ENCODE measurements at regions of chr4 and their contacts with region 1.

Region 1: GRCh38 chr4:8440492-8441341 is at the starts of genes ACOX3 and TRMT44:
- DNase-seq: peak; percentile 76 to 95
- H3K4me3 ChIP-seq: peak within 1 kb of the TSS; percentile 82
- H3K27ac ChIP-seq: peak within 1 kb of the TSS; percentile 93
- H3K4me1 ChIP-seq: peaks cover 12% of the 10 kb centered on the region
- H3K27me3 ChIP-seq: no peaks in the 10 kb centered on the region
- CTCF ChIP-seq: no peak
- total RNA-seq, gene ACOX3: 21.0 and 26.1 TPM in 2 replicates
- total RNA-seq, gene TRMT44: 17.4 and 17.9 TPM in 2 replicates

Region 2: GRCh38 chr4:8241895-8242696 is 198.6 kb before region 1 on chr4:
- CTCF ChIA-PET with region 1: no interaction called
- POLR2A ChIA-PET with region 1: no interaction called
- intact Hi-C with region 1: no loop called
- DNase-seq: peak in 1 of 2 experiments; percentile 85
- H3K4me3 ChIP-seq: no peak overlapping the region
- H3K27ac ChIP-seq: no peak overlapping the region
- H3K4me1 ChIP-seq: peaks cover 5% of the 10 kb centered on the region; the same call in 1 of the 2 replicates
- H3K27me3 ChIP-seq: no peaks in the 10 kb centered on the region
- CTCF ChIP-seq: peak; percentile 84

Region 3: GRCh38 chr4:8303485-8304301 is 137.0 kb before region 1 on chr4:
- CTCF ChIA-PET with region 1: no interaction called
- POLR2A ChIA-PET with region 1: no interaction called
- intact Hi-C with region 1: no loop called
- DNase-seq: peak in 1 of 2 experiments; percentile 28
- H3K4me3 ChIP-seq: no peak overlapping the region
- H3K27ac ChIP-seq: peak overlapping the region; percentile 51; the same call in 1 of the 2 replicates
- H3K4me1 ChIP-seq: peaks cover 14% of the 10 kb centered on the region
- H3K27me3 ChIP-seq: no peaks in the 10 kb centered on the region
- CTCF ChIP-seq: no peak

Region 4: DNA sequence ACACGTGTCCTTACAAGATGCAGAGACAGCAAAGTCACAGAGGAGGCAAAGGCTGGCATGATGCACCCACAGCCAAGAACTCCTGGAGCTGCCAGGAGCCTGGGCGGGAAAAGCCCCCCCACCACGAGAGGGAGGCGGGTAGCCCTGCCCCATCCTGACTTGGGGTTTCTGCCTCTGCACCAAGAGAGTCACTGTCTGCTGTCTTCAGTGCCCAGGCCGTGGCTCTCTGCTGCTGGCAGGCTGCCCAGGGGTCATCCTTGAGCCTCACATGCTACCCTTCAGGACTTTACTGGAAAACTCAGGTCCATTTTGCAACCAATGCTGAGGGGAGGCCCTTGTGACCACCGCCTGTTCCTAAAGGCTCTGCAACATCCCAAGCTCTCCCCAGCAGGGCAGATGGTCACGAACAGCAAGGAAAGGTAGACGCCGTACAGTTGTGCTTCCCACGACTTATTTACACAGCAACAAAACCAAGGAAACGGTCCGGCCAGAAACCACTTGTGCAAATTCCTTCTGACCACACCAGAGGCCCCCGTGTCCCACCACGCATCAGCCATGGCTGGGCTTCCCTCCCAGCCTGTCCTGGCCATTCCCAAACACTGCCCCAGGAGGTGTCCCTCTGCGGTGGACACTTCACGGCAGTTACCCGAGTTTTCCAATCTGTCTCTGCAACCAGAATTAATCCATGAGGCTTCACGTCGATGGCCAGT is 57.1 kb before region 1 on chr4:
- CTCF ChIA-PET with region 1: no interaction called
- POLR2A ChIA-PET with region 1: no interaction called
- intact Hi-C with region 1: no loop called
- DNase-seq: no peak
- H3K4me3 ChIP-seq: no peak overlapping the region
- H3K27ac ChIP-seq: no peak overlapping the region
- H3K4me1 ChIP-seq: peaks cover 14% of the 10 kb centered on the region
- H3K27me3 ChIP-seq: no peaks in the 10 kb centered on the region
- CTCF ChIP-seq: no peak

Region 5: GRCh38 chr4:8422336-8422735 is 18.4 kb before region 1 on chr4:
- CTCF ChIA-PET with region 1: no interaction called
- POLR2A ChIA-PET with region 1: no interaction called
- intact Hi-C with region 1: loop called (anchors 2 kb)
- DNase-seq: peak; percentile 74 to 89
- H3K4me3 ChIP-seq: peak overlapping the region; percentile 14; the same call in 1 of the 2 replicates
- H3K27ac ChIP-seq: peak overlapping the region; percentile 44
- H3K4me1 ChIP-seq: peaks cover 43% of the 10 kb centered on the region
- H3K27me3 ChIP-seq: no peaks in the 10 kb centered on the region
- CTCF ChIP-seq: no peak

Region 6: GRCh38 chr4:10045481-10045880 is 1604.8 kb after region 1 on chr4:
- CTCF ChIA-PET with region 1: no interaction called
- POLR2A ChIA-PET with region 1: no interaction called
- intact Hi-C with region 1: no loop called
- DNase-seq: peak in 1 of 2 experiments; percentile 92
- H3K4me3 ChIP-seq: no peak overlapping the region
- H3K27ac ChIP-seq: peak overlapping the region; percentile 59
- H3K4me1 ChIP-seq: peaks cover 27% of the 10 kb centered on the region
- H3K27me3 ChIP-seq: no peaks in the 10 kb centered on the region
- CTCF ChIP-seq: no peak

Measured in PC-9 (cell line).